ENCODE measurements at regions of chr2 and their contacts with region 1.

Region 1: DNA sequence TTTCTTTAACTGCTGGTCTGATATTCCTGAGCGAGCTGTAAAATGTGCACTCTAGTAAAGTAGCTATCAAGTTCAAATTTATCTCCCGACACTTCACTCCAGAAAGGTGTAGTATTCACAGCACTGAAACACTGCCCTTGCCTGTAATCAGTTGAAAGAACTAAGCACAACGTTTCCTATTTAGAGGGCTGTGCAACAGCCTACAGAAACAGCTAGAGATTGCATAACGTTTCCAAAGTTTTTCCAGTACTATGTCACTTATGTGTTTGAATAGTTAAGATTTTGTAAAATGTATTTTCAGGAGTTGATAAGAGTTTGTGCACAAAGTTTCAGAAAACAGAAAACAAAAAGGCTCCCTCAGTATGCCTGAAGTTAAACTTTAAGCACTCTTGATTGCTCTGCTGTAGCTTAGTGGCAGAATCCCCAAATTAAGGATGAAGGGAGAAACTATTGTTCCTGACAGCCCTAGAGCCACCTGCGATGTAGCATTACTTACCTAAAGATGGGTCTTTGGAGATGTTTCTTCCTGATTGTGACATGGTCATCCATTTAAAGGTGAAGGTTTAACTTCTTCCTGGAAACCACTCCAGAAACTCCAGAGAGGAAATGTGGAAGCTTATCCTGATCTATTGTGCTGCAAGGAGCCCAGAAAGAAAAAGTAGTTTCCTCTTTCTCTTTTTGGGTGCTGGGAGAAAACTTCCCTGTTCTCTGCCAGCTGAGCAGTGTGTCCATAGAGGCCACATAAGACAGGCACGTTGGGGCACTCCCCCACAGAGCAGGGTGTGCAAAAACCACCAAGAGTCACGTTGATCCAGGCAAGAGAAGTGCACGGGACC is 536 bp downstream of the PDE1A start:
- DNase-seq: no peak
- ATAC-seq: peak; percentile 56 to 81 (median 65)
- H3K4me3 ChIP-seq: peak overlapping the region; percentile 13 to 68 (median 50)
- H3K27ac ChIP-seq: peak overlapping the region; percentile 26 to 87 (median 74)
- H3K4me1 ChIP-seq: peaks cover 0 to 8% (median 0%) of the 10 kb centered on the region in 12 donors
- H3K27me3 ChIP-seq: no peaks in the 10 kb centered on the region
- CTCF ChIP-seq: no peak
- POLR2A ChIP-seq: no peak

Region 2: GRCh38 chr2:182186132-182186735 is 240.1 kb before region 1 on chr2:
- intact Hi-C with region 1: loop called in 1 of 10 experiments (anchors 10 kb)
- DNase-seq: no peak
- ATAC-seq: peak in 2 of 4 donors; percentile 36 to 55
- H3K4me3 ChIP-seq: no peak overlapping the region
- H3K27ac ChIP-seq: peak overlapping the region in 3 of 12 donors; percentile 3 to 36 (median 20)
- H3K4me1 ChIP-seq: peaks cover 0 to 12% (median 4%) of the 10 kb centered on the region in 12 donors
- H3K27me3 ChIP-seq: no peaks in the 10 kb centered on the region
- CTCF ChIP-seq: peak; percentile 73 to 90 (median 84)
- POLR2A ChIP-seq: no peak

Region 3: DNA sequence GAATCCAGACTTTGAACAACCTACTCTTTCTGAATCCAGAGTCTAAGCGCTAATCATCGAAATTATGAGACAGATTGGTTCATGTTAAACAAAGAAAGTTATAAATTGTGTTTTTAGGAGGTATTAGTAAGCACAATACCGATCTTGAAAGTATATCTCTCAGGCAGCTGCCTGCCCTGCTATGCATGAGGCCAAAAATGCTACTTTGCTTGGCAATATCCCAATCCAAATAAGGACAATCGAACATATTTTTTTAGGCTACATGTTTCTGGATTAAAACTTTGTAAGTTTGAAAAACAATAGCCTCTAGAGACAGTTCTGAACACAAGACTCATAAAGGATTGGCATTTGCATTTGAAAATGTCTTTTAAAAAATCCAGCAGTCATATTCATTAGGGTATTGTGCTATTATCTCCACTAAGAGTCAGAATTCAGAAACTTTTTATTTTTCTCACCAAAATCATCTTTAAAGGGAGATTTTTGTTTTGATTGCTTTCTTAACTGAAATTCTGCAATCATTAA is 166.6 kb before region 1 on chr2:
- intact Hi-C with region 1: loop called in 1 of 10 experiments (anchors 10 kb)
- DNase-seq: no peak
- ATAC-seq: peak in 1 of 4 donors; percentile 36
- H3K4me3 ChIP-seq: no peak overlapping the region
- H3K27ac ChIP-seq: peak overlapping the region in 4 of 12 donors; percentile 11 to 25 (median 16)
- H3K4me1 ChIP-seq: peaks cover 0 to 15% (median 0%) of the 10 kb centered on the region in 12 donors
- H3K27me3 ChIP-seq: no peaks in the 10 kb centered on the region
- CTCF ChIP-seq: no peak
- POLR2A ChIP-seq: no peak

Region 4: DNA sequence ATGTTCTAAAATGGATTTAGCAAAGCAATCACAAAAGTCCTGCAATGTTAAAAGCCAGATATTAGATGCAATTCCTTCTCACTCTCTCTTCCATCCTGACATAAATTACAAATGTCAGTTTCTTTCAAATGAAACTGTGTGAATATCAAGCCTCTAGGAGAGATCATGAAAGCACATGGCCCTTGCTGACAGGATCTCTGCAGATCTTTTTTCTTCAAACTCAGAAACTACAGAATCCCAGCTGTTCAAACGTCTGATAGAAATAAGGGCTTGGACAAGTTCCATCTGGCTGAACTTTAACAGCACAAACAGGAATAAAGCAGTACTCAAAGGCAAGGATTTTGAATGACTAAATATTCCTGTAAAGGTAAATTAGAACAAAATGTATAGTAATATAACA is 47.1 kb before region 1 on chr2:
- intact Hi-C with region 1: loop called in 2 of 10 experiments (anchors 5 kb)
- DNase-seq: peak in 1 of 5 donors; percentile 51
- ATAC-seq: peak; percentile 38 to 86 (median 71)
- H3K4me3 ChIP-seq: peak overlapping the region in 1 of 12 donors; percentile 11
- H3K27ac ChIP-seq: peak overlapping the region in 10 of 12 donors; percentile 20 to 61 (median 48)
- H3K4me1 ChIP-seq: peaks cover 0 to 28% (median 10%) of the 10 kb centered on the region in 12 donors
- H3K27me3 ChIP-seq: no peaks in the 10 kb centered on the region
- CTCF ChIP-seq: no peak
- POLR2A ChIP-seq: no peak

Region 5: DNA sequence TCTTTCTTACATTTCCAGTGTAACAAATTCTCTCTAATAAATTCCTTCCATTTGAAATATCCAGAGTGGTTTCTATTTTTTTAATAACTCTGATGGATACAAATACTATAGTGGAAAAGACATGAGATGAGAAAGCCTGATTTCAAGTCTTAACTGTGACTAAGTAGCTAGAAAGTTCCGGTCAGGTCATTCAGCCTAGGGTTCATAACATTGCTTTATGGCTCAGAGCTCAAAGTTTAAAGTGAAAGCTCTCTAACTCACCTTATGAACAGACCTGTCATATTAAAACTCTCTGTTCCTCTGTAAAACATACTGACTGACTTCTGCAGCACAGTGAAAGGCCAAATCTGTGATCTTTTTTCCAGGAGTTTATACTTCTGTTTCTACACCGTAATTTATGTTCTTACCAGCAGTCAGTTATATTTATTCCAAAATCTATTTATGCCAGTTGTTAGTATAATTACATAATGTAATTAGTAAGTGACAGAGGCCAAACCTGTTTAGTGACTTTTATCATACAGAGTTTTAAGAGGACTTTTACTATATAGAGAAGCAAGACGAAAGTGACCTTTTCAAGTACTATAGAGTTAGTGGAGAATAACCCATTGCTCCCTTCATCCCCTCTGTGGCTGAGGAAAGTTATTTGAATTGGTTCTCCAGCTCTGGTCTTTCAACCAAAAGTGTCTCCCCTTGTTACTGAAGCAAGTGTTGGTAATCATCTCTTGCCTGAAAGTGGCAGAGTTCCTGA is 119.3 kb after region 1 on chr2:
- intact Hi-C with region 1: no loop called
- DNase-seq: no peak
- ATAC-seq: no peak
- H3K4me3 ChIP-seq: no peak overlapping the region
- H3K27ac ChIP-seq: peak overlapping the region in 4 of 12 donors; percentile 2 to 60 (median 22)
- H3K4me1 ChIP-seq: peaks cover 0 to 30% (median 11%) of the 10 kb centered on the region in 12 donors
- H3K27me3 ChIP-seq: no peaks in the 10 kb centered on the region
- CTCF ChIP-seq: no peak
- POLR2A ChIP-seq: no peak

Region 6: GRCh38 chr2:182586432-182586831 is 160.1 kb after region 1 on chr2:
- intact Hi-C with region 1: loop called in 1 of 10 experiments (anchors 10 kb)
- DNase-seq: no peak
- ATAC-seq: no peak
- H3K4me3 ChIP-seq: no peak overlapping the region
- H3K27ac ChIP-seq: no peak overlapping the region
- H3K4me1 ChIP-seq: no peaks in the 10 kb centered on the region
- H3K27me3 ChIP-seq: no peaks in the 10 kb centered on the region
- CTCF ChIP-seq: no peak
- POLR2A ChIP-seq: no peak

Region 7: GRCh38 chr2:182642328-182642727 is 216.0 kb after region 1 on chr2:
- intact Hi-C with region 1: loop called in 2 of 10 experiments (anchors 5 to 10 kb)
- DNase-seq: peak in 4 of 5 donors; percentile 26 to 71 (median 46)
- ATAC-seq: peak in 3 of 4 donors; percentile 64 to 83 (median 79)
- H3K4me3 ChIP-seq: no peak overlapping the region
- H3K27ac ChIP-seq: no peak overlapping the region
- H3K4me1 ChIP-seq: no peaks in the 10 kb centered on the region
- H3K27me3 ChIP-seq: no peaks in the 10 kb centered on the region
- CTCF ChIP-seq: no peak
- POLR2A ChIP-seq: no peak

Region 8: GRCh38 chr2:182650704-182651103 is 224.4 kb after region 1 on chr2:
- intact Hi-C with region 1: loop called in 2 of 10 experiments (anchors 5 to 10 kb)
- DNase-seq: no peak
- ATAC-seq: peak in 2 of 4 donors; percentile 53 to 70
- H3K4me3 ChIP-seq: no peak overlapping the region
- H3K27ac ChIP-seq: no peak overlapping the region
- H3K4me1 ChIP-seq: peaks cover 0 to 14% (median 0%) of the 10 kb centered on the region in 12 donors
- H3K27me3 ChIP-seq: no peaks in the 10 kb centered on the region
- CTCF ChIP-seq: peak; percentile 37 to 68 (median 57)
- POLR2A ChIP-seq: no peak